Psoas muscle (tissue), 8 donors: ENCODE measurements at regions of chr20 and their contacts with region 1.

Region 1: DNA sequence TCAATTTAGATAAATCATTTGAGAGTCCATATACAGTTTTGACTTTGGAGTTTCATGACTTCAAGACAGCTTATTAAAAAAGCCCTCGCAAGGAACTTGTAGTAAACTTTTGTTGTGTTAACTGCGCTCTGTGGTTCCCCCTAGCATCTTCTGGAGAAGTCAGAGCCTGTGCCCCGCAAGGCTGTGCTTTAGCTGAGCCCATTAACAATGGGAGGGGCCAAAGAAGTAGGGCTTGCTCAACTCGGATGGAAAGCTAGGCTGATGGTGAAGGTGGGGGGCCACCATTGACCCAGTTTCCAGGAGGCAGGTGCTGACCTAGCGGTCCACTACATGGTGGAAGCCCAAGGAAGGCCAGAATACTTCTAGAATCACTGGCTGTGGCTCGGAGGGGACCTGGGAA is 29.3 kb upstream of the OVOL2 start:
- DNase-seq: no peak
- ATAC-seq: no peak
- H3K4me3 ChIP-seq: no peak overlapping the region
- H3K27ac ChIP-seq: no peak overlapping the region
- H3K4me1 ChIP-seq: no peaks in the 10 kb centered on the region
- H3K27me3 ChIP-seq: peaks cover 0 to 2% (median 0%) of the 10 kb centered on the region in 3 donors
- CTCF ChIP-seq: no peak

Region 2: DNA sequence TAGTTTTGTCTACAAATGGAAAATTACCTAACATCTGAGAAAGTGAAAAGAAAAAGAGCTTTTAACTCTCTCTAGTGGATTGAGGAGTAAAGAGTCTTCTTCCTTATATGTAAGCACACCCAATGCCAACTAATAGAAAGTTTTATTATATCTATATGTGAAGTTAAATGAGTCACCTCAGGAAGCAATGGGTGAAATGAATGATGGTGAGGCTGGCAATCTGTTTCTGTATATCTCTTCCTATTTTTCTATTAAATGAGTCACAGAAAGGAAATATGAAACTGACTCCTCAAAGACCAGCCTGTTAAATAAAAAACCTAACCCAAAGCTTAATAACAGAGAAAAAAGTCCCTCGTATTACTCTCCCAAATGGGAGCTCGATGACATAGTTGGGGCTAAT is 1267.6 kb before region 1 on chr20:
- intact Hi-C with region 1: loop called in 1 of 2 experiments (anchors 5 kb)
- DNase-seq: no peak
- ATAC-seq: no peak
- H3K4me3 ChIP-seq: no peak overlapping the region
- H3K27ac ChIP-seq: no peak overlapping the region
- H3K4me1 ChIP-seq: no peaks in the 10 kb centered on the region
- H3K27me3 ChIP-seq: no peaks in the 10 kb centered on the region
- CTCF ChIP-seq: no peak

Region 3: DNA sequence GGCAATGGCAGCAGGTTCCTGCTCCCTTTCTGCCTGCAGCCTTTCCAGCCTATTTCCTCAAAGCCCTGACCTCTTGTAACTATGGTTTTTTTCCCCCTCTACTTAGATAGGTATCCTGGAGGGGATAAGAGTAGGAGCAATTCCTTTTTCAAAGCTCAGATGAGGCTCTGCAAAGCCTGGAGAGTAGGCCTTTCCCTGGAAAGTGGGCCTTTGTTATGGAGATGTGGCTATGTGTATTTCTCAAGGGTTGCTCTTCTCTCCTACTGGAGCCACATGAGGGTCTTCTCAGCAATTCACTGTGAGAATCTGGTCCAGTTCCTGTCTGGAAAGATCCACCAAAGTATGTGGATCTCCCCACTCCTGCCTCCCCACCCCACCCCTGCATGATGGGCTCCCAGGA is 596.8 kb after region 1 on chr20:
- intact Hi-C with region 1: loop called in 1 of 2 experiments (anchors 10 kb)
- DNase-seq: no peak
- ATAC-seq: no peak
- H3K4me3 ChIP-seq: no peak overlapping the region
- H3K27ac ChIP-seq: no peak overlapping the region
- H3K4me1 ChIP-seq: no peaks in the 10 kb centered on the region
- H3K27me3 ChIP-seq: no peaks in the 10 kb centered on the region
- CTCF ChIP-seq: no peak